Gastrocnemius medialis (tissue), 4 donors: ENCODE measurements at regions of chr18 and their contacts with region 1.

Region 1: GRCh38 chr18:31942999-31943865 is at the start of gene TRAPPC8:
- DNase-seq: peak; percentile 98 to 99
- ATAC-seq: peak; percentile 95 to 98
- H3K4me3 ChIP-seq: peak within 1 kb of the TSS; percentile 79 to 98 (median 84)
- H3K27ac ChIP-seq: peak within 1 kb of the TSS; percentile 86 to 97 (median 96)
- H3K4me1 ChIP-seq: peaks cover 32 to 33% of the 10 kb centered on the region in 2 donors
- H3K27me3 ChIP-seq: no peaks in the 10 kb centered on the region
- CTCF ChIP-seq: peak in 3 of 5 experiments; percentile 11 to 32 (median 16)
- POLR2A ChIP-seq: peak; percentile 59 to 70
- total RNA-seq, gene TRAPPC8: 29.8 to 40.7 (median 39.1) TPM

Region 2: DNA sequence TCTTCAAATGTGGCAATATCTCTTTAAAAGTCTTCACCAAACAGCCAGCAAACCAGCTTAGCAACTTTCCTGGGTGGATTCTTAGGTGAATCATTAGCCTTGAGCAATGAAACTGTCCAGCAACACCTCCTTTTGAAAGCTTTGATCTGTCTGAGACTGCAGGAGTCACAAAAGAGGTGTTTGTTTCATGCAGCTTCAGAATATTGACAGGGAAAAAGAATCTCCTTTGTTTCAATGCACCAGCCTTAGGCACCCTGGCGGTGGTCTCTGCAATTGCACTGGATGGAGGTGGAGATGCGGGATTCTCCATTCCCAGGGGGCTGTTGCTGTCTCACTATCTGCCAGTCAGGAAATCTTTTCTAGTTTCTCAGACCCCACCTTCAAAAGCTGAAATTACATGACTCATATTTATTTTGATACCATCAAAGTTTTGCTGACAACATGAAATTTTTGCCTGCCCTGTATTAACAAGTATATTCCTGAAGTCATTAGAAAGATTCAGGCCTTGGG is 701.3 kb before region 1 on chr18:
- in situ Hi-C with region 1: no loop called
- intact Hi-C with region 1: no loop called
- DNase-seq: no peak
- ATAC-seq: no peak
- H3K4me3 ChIP-seq: no peak overlapping the region
- H3K27ac ChIP-seq: no peak overlapping the region
- H3K4me1 ChIP-seq: no peaks in the 10 kb centered on the region
- H3K27me3 ChIP-seq: no peaks in the 10 kb centered on the region
- CTCF ChIP-seq: no peak
- POLR2A ChIP-seq: no peak

Region 3: DNA sequence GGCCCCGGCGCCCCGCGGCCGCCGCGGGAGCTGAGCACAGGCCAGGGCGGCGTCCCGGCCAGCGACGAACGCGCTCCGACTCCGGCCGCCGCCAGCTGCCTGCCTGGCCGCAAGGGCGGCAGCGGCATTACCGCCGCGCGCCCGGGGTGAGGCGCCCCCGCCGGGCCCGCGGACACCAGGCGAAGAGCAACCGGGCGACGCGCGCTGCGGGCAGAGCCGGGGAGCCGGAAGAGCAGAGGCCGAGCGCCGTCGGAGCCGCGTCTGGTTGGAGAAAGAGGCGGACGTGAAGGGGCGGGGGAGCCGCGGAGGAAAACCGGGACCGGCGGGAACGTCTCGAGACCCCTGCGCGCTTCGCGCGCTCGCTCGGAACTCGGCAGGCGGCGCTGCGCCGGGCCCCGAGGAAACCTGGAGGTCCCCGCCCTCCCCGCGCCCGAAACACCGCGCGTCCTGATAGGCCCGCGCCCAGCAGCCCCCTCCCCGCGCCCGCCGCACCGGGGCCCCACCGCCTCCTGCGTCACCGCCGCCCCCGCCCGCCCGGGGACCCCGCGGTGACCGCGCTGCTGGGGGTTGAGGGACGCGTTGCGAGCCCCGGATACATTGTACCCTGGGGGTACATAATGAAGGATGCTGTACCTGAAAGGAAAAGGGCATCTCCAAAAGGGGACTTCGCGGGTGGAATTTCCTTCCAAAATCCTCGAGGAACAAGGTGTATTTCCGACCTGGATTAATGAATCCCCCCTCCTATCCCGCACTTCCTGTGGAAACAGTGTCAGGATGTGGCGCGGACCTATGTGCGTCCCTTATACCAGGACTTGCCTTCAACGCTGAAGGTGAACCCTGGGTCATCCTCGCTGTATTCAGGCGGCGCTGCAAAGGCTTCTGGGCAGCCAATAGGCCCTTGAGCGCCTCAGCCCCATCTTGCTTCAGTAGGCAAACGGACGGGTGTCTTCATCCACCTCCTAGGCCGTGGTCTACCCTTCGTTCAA is 257.8 kb before region 1 on chr18:
- in situ Hi-C with region 1: no loop called
- intact Hi-C with region 1: loop called (anchors 5 kb)
- DNase-seq: peak in 1 of 2 donors; percentile 29
- ATAC-seq: peak; percentile 86
- H3K4me3 ChIP-seq: peak overlapping the region; percentile 53 to 70 (median 60)
- H3K27ac ChIP-seq: peak overlapping the region; percentile 43 to 71 (median 52)
- H3K4me1 ChIP-seq: peaks cover 6 to 8% of the 10 kb centered on the region in 2 donors
- H3K27me3 ChIP-seq: no peaks in the 10 kb centered on the region
- CTCF ChIP-seq: peak in 4 of 5 experiments; percentile 16 to 64 (median 34)
- POLR2A ChIP-seq: peak; percentile 35 to 40

Region 4: DNA sequence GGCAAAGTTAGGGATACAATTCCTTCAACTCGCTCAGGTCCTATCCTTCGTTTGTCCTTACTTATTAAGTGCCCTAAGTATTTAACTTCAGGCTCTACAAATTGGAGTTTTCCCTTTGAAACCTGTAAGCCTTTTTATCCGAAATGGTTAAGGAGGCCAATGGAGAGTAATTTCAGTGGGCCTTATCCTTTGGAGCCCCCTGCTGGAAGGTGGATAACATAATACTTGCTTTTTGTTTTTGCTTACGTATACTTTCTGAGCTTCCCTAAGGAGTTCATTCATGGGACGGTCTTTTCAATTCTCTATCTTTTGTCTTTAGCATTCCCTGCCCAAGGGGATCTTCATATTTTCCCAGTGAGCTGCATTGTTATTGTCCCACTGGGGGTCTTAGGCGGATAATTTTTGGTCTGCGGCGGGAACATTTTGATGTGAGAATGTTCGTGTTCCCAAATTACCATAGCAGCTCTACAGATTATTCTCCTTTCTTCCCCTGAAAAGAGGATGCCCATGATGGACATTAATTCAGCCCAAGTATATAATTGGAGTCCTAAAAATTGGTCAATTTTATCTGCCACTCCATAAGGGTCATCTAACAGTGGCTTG is 34.1 kb after region 1 on chr18:
- in situ Hi-C with region 1: no loop called
- intact Hi-C with region 1: loop called (anchors 1 kb)
- DNase-seq: peak in 1 of 2 donors; percentile 10
- ATAC-seq: peak; percentile 66 to 85
- H3K4me3 ChIP-seq: no peak overlapping the region
- H3K27ac ChIP-seq: no peak overlapping the region
- H3K4me1 ChIP-seq: no peaks in the 10 kb centered on the region
- H3K27me3 ChIP-seq: no peaks in the 10 kb centered on the region
- CTCF ChIP-seq: peak; percentile 54 to 82 (median 73)
- POLR2A ChIP-seq: no peak

Region 5: DNA sequence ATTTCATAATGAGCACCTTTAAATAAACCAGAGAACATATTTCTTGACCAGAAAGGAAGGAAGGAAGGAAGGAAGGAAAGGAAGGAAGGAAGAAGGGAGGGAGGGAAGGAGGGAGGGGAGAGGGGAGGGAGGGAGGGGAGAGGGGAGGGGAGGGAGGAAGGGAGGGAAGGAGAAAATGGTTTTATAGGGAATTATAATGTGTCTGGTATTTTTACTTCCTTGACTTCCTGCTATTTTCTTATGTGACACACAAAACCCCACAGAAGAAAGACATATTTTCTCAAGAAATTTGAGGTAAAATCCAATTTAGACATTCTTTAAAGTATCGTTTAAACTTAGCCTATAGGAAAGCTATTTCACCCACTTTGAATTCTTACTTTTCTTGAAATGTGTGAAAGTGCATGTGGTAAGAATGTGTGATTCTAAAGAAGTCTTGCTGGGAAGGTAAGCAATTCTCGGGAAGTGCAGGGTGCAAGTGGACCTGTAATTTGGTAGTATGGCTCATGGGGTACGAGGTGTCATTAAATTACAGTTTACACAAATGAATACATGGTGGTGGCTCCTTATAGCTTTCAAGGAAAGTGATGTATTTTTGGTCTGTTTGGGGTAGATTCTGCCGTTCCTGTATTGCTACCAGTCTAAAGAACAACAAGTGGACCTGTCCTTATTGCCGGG is 93.4 kb after region 1 on chr18:
- in situ Hi-C with region 1: no loop called
- intact Hi-C with region 1: no loop called
- DNase-seq: no peak
- ATAC-seq: no peak
- H3K4me3 ChIP-seq: no peak overlapping the region
- H3K27ac ChIP-seq: no peak overlapping the region
- H3K4me1 ChIP-seq: no peaks in the 10 kb centered on the region
- H3K27me3 ChIP-seq: no peaks in the 10 kb centered on the region
- CTCF ChIP-seq: no peak
- POLR2A ChIP-seq: no peak

Region 6: DNA sequence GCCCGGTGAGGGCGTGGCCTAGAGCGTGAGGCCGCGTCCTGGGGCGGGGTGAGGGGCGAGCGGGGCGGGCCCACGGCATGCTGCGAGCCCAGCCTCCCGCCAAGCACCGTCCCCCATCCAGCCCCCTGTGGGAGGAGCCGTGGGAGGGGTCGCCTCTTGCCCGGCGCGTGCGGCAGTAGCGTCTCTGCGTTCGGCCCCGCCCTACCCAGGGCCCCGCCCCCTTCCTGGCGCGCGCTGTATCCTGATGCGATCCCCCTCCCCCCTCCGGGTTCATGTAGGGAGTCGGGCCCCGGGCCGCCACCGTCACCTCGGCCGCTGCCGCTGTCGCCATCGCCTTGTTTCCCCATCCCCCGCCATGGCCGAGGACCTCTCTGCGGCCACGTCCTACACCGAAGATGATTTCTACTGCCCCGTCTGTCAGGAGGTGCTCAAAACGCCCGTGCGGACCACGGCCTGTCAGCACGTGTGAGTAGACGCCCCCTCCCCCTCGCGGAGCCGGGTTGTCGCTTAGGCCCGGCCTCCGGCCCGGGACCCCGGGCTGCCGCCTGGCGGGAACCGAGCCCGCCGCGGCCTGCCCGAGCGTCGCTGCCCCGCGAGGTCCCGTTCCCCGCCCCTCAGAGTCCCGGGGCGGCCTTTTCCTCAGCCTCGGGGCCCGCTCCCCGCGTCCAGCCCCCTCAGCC is 149.3 kb after region 1 on chr18:
- in situ Hi-C with region 1: loop called in 2 of 4 experiments (anchors 10 to 25 kb)
- intact Hi-C with region 1: loop called (anchors 1 kb)
- DNase-seq: peak; percentile 98
- ATAC-seq: peak; percentile 82 to 85
- H3K4me3 ChIP-seq: peak overlapping the region; percentile 85 to 97 (median 92)
- H3K27ac ChIP-seq: peak overlapping the region; percentile 98 to 100 (median 100)
- H3K4me1 ChIP-seq: peaks cover 40 to 43% of the 10 kb centered on the region in 2 donors
- H3K27me3 ChIP-seq: no peaks in the 10 kb centered on the region
- CTCF ChIP-seq: no peak
- POLR2A ChIP-seq: peak; percentile 64 to 80

Region 7: DNA sequence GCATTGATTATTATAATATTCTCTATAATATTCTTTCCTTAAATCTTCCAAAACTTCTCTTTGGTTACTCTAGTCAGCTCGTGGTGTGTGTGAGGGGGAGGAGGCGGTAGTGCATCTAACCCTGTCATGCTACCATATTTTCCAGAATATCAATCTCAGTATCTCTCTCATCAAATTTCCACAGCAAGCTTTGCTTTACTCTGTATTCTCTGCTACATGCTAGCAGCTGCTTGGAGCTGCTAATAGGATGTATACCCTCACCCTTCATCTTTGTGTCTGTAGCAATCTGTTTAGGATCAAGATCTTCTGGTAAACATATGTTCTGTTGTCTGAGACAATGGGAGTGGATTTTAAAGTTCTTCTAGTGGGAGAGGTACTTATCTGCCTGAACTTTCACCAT is 1133.4 kb after region 1 on chr18:
- in situ Hi-C with region 1: no loop called
- intact Hi-C with region 1: no loop called
- DNase-seq: no peak
- ATAC-seq: no peak
- H3K4me3 ChIP-seq: no peak overlapping the region
- H3K27ac ChIP-seq: no peak overlapping the region
- H3K4me1 ChIP-seq: no peaks in the 10 kb centered on the region
- H3K27me3 ChIP-seq: no peaks in the 10 kb centered on the region
- CTCF ChIP-seq: no peak
- POLR2A ChIP-seq: no peak